ENCODE measurements at regions of chr4 and their contacts with region 1.

Region 1: GRCh38 chr4:128863312-128864075 is 54.0 kb downstream of the JADE1 start:
- DNase-seq: peak; percentile 34
- H3K4me3 Mint-ChIP-seq: peak overlapping the region; percentile 27
- H3K27ac Mint-ChIP-seq: peak overlapping the region; percentile 87
- H3K4me1 Mint-ChIP-seq: peaks cover 53% of the 10 kb centered on the region
- H3K27me3 Mint-ChIP-seq: no peaks in the 10 kb centered on the region

Region 2: GRCh38 chr4:128454281-128455075 is 409.0 kb before region 1 on chr4:
- intact Hi-C with region 1: loop called (anchors 1 kb)
- DNase-seq: peak; percentile 20
- H3K4me3 Mint-ChIP-seq: no peak overlapping the region
- H3K27ac Mint-ChIP-seq: no peak overlapping the region
- H3K4me1 Mint-ChIP-seq: peaks cover 4% of the 10 kb centered on the region
- H3K27me3 Mint-ChIP-seq: peaks cover 11% of the 10 kb centered on the region

Region 3: GRCh38 chr4:128782076-128782715 is 81.3 kb before region 1 on chr4:
- intact Hi-C with region 1: loop called (anchors 1 kb)
- DNase-seq: no peak
- H3K4me3 Mint-ChIP-seq: no peak overlapping the region
- H3K27ac Mint-ChIP-seq: no peak overlapping the region
- H3K4me1 Mint-ChIP-seq: no peaks in the 10 kb centered on the region
- H3K27me3 Mint-ChIP-seq: peaks cover 2% of the 10 kb centered on the region